HEK293T (cell line): ENCODE measurements at regions of chr1 and their contacts with region 1.

Region 1: GRCh38 chr1:153958111-153958960 is at the start of gene CRTC2:
- DNase-seq: peak; percentile 97

Region 2: GRCh38 chr1:153977250-153978240 is 19.2 kb after region 1 on chr1 and contains the start of gene JTB:
- CTCF ChIA-PET with region 1: no interaction called
- POLR2A ChIA-PET with region 1: interaction called, 65 read pairs
- DNase-seq: peak; percentile 89